ENCODE measurements at regions of chr3 and their contacts with region 1.

Region 1: GRCh38 chr3:129845956-129846355 is 47.6 kb downstream of the TMCC1 start:
- DNase-seq: no peak
- ATAC-seq: no peak
- H3K4me3 ChIP-seq: no peak overlapping the region
- H3K4me3 Mint-ChIP-seq: no peak overlapping the region
- H3K27ac ChIP-seq: no peak overlapping the region
- H3K27ac Mint-ChIP-seq: peak overlapping the region; percentile 25
- H3K4me1 ChIP-seq: no peaks in the 10 kb centered on the region
- H3K4me1 Mint-ChIP-seq: peaks cover 7% of the 10 kb centered on the region
- H3K27me3 ChIP-seq: no peaks in the 10 kb centered on the region
- H3K27me3 Mint-ChIP-seq: no peaks in the 10 kb centered on the region
- CTCF ChIP-seq: no peak

Region 2: GRCh38 chr3:128841926-128842920 is 1003.7 kb before region 1 on chr3:
- CTCF ChIA-PET with region 1: no interaction called
- POLR2A ChIA-PET with region 1: no interaction called
- intact Hi-C with region 1: no loop called
- DNase-seq: no peak
- ATAC-seq: no peak
- H3K4me3 ChIP-seq: no peak overlapping the region
- H3K4me3 Mint-ChIP-seq: no peak overlapping the region
- H3K27ac ChIP-seq: no peak overlapping the region
- H3K27ac Mint-ChIP-seq: no peak overlapping the region
- H3K4me1 ChIP-seq: peaks cover 19% of the 10 kb centered on the region
- H3K4me1 Mint-ChIP-seq: peaks cover 9% of the 10 kb centered on the region
- H3K27me3 ChIP-seq: no peaks in the 10 kb centered on the region
- H3K27me3 Mint-ChIP-seq: no peaks in the 10 kb centered on the region
- CTCF ChIP-seq: no peak

Region 3: GRCh38 chr3:129878372-129878771 is 32.4 kb after region 1 on chr3:
- CTCF ChIA-PET with region 1: no interaction called
- POLR2A ChIA-PET with region 1: no interaction called
- intact Hi-C with region 1: loop called in 1 of 2 experiments (anchors 1 kb)
- DNase-seq: no peak
- ATAC-seq: no peak
- H3K4me3 ChIP-seq: no peak overlapping the region
- H3K4me3 Mint-ChIP-seq: no peak overlapping the region
- H3K27ac ChIP-seq: no peak overlapping the region
- H3K27ac Mint-ChIP-seq: no peak overlapping the region
- H3K4me1 ChIP-seq: no peaks in the 10 kb centered on the region
- H3K4me1 Mint-ChIP-seq: peaks cover 25% of the 10 kb centered on the region
- H3K27me3 ChIP-seq: no peaks in the 10 kb centered on the region
- H3K27me3 Mint-ChIP-seq: no peaks in the 10 kb centered on the region
- CTCF ChIP-seq: no peak

Region 4: GRCh38 chr3:130288670-130289069 is 442.7 kb after region 1 on chr3:
- CTCF ChIA-PET with region 1: no interaction called
- POLR2A ChIA-PET with region 1: no interaction called
- intact Hi-C with region 1: no loop called
- DNase-seq: no peak
- ATAC-seq: no peak
- H3K4me3 ChIP-seq: no peak overlapping the region
- H3K4me3 Mint-ChIP-seq: no peak overlapping the region
- H3K27ac ChIP-seq: no peak overlapping the region
- H3K27ac Mint-ChIP-seq: no peak overlapping the region
- H3K4me1 ChIP-seq: no peaks in the 10 kb centered on the region
- H3K4me1 Mint-ChIP-seq: no peaks in the 10 kb centered on the region
- H3K27me3 ChIP-seq: peaks cover 0 to 3% of the 10 kb centered on the region in 2 experiments
- H3K27me3 Mint-ChIP-seq: peaks cover 12% of the 10 kb centered on the region
- CTCF ChIP-seq: no peak

Measured in CD8-positive, alpha-beta T cell (primary cell).